ENCODE measurements at regions of chr10 and their contacts with region 1.

Region 1: DNA sequence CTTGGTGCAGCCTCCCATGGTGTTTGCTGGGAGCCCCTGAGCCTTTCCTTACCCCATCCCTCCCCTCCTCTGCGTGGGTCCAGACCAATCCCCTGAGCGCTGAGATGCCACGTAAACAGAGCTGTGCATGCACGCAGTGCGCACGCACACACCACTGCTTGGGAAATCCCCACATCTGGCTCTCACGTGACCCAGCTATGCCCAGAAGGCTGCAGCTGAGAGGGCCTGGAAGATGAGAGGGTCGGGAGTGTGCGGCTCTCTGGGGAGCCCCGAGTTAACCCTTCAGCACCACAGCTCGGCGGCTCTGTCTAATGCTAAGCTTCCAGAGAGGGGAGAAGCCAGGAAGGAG is 177.2 kb downstream of the SH3PXD2A start:
- DNase-seq: peak; percentile 93
- CTCF ChIP-seq: no peak

Region 2: GRCh38 chr10:103666087-103666761 is 11.9 kb before region 1 on chr10:
- CTCF ChIA-PET with region 1: interaction called, 17 read pairs
- POLR2A ChIA-PET with region 1: interaction called, 3 read pairs
- DNase-seq: no peak
- CTCF ChIP-seq: peak; percentile 22

Measured in GM10248 (cell line).